Aorta (tissue), 5 donors: ENCODE measurements at regions of chr22 and their contacts with region 1.

Region 1: GRCh38 chr22:21778705-21779363 is 43.2 kb upstream of the YPEL1 start:
- DNase-seq: no peak
- ATAC-seq: no peak
- H3K4me3 ChIP-seq: no peak overlapping the region
- H3K27ac ChIP-seq: no peak overlapping the region
- H3K4me1 ChIP-seq: peaks cover 0 to 2% of the 10 kb centered on the region in 2 donors
- H3K27me3 ChIP-seq: no peaks in the 10 kb centered on the region

Region 2: GRCh38 chr22:21861851-21862250 is 83.0 kb after region 1 on chr22:
- intact Hi-C with region 1: loop called in 1 of 2 experiments (anchors 5 kb)
- DNase-seq: no peak
- ATAC-seq: no peak
- H3K4me3 ChIP-seq: no peak overlapping the region
- H3K27ac ChIP-seq: no peak overlapping the region
- H3K4me1 ChIP-seq: peaks cover 5 to 8% of the 10 kb centered on the region in 2 donors
- H3K27me3 ChIP-seq: no peaks in the 10 kb centered on the region